ENCODE measurements at regions of chr11 and their contacts with region 1.

Region 1: DNA sequence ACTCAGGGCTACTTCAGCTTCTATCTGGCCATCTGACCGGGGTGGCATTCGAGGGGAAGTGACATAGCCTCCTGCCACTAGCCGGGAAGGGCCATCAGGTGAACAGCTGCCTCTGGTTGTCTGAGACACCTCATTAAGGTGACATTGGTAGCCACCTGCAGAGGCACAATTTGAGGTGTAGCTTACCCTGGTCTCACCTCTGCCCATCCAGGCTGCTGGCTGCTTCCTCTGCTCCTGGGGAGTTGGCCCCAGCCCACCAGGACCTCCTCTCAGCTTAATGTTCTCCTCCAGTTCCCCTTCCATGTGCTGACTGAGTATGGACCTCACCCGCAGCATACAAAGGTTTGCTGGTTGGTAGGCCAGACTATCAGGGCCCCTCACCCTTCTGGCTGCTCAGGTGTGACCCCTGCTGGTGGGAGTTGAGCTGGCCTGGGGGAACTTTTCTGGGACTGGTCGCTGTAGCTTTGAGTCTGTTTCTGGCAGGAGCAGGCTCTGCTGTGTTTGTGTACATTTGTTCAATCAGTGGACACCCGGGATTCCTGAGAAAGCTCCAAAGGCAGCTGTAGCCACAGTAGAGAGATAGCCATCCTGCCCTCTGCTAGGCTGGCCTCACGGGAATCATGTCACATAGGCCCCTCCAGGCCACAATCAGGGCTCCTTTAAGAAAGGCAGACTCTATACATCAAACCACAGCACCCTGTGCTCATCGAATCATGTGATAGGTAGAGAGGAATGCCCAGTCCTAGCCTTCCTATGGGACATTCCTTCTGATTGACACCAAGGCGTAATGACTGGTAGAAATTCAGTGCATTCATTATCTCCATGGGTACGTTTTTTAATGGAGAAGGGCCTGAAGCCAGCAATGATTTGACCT is 295.1 kb upstream of the PLET1 start:
- DNase-seq: peak; percentile 15 to 46
- ATAC-seq: peak; percentile 64 to 77
- H3K4me3 ChIP-seq: no peak overlapping the region
- H3K27ac ChIP-seq: no peak overlapping the region
- H3K4me1 ChIP-seq: no peaks in the 10 kb centered on the region
- H3K27me3 ChIP-seq: no peaks in the 10 kb centered on the region
- CTCF ChIP-seq: peak; percentile 20 to 76 (median 65)
- POLR2A ChIP-seq: no peak

Region 2: DNA sequence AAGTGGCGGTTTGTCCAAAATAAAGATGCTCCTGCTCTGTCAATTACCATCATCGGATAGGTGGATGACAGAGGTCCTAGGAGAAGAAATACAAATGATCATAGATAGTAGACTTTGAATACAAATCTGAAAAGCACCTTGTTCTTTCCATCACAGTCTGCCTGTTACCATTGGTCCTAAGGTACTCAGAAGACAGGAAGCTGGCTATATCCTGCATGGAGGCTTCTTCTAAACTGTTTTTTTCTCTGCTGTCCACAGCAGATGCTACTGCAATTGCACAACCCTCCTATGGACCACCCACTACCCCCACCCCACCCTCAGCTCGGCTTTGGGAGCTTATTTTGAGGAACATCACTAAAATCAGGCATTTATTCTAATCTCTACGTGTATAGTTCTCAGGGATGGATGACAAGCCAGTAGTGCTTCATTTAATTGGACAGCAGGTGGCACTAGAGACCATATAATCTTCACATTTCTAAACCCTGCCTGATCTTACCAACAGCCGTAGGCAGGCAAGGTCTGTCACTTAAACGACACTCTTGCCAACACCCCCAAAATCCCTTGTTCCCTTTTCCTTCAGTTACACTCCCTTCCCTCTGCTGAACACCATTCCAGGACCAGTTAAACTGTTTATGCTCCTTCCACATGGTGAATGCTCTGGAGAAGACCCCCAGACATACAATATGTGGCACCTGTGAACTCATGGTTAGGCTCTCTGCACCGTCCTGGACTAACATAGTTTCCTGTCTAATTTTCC is 336.1 kb before region 1 on chr11:
- in situ Hi-C with region 1: no loop called
- intact Hi-C with region 1: loop called (anchors 10 kb)
- DNase-seq: peak; percentile 13 to 21
- ATAC-seq: peak; percentile 92 to 97
- H3K4me3 ChIP-seq: no peak overlapping the region
- H3K27ac ChIP-seq: no peak overlapping the region
- H3K4me1 ChIP-seq: no peaks in the 10 kb centered on the region
- H3K27me3 ChIP-seq: no peaks in the 10 kb centered on the region
- CTCF ChIP-seq: peak; percentile 83 to 86 (median 85)
- POLR2A ChIP-seq: no peak

Region 3: GRCh38 chr11:112280268-112281126 is 275.2 kb before region 1 on chr11:
- in situ Hi-C with region 1: loop called in 3 of 4 experiments (anchors 5 to 10 kb)
- intact Hi-C with region 1: no loop called
- DNase-seq: peak; percentile 35 to 59
- ATAC-seq: peak; percentile 84 to 96
- H3K4me3 ChIP-seq: peak overlapping the region; percentile 43 to 67 (median 60)
- H3K27ac ChIP-seq: peak overlapping the region in 1 of 4 donors; percentile 29
- H3K4me1 ChIP-seq: peaks cover 0 to 4% of the 10 kb centered on the region in 2 donors
- H3K27me3 ChIP-seq: no peaks in the 10 kb centered on the region
- CTCF ChIP-seq: peak; percentile 48 to 73 (median 66)
- POLR2A ChIP-seq: no peak

Region 4: DNA sequence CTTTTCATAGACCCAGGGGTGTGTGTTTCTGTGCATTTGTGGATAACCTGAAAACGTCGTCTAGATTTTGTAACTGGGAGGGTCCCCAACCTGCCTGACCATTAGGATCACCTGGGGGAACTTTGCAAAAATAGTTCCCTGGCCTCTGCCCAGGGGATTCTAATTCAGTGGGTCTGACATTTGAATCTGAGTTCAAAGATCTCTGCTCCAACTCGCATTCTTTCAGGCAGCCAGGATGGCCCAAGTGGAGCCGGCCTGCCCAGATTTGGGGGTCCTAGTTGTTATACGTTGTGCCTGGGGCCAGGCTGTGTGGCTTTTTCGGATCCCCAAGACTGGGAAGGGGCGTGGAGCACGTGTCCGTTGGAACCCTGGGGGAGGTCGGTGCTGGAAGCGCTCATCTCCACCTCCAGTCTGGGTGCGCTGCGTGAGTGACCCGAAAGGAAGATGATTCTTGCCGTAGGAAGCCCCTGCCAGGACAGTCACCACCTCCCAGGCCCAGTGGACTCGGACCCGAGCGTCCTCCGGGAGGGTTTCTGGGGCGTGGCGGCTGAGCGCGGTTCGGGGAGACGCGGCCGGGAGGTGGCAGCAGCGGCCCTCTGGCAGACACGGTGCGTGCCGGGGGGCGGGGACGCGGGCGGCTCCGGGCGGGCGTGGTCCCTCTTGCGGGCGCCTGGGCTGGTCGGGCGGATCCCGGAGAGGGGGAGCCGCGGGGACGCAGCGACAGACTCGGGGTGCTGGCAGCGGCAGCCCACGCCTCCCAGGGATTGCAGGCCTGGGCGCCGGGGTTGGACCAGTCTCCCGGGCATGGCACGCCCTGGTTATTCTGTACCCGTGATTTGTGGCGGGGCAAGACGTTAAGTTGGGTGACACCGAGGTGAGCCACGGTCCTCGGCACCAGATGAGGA is 265.9 kb before region 1 on chr11:
- in situ Hi-C with region 1: loop called in 3 of 4 experiments (anchors 5 to 10 kb)
- intact Hi-C with region 1: loop called (anchors 1 kb)
- DNase-seq: peak; percentile 63 to 67
- ATAC-seq: peak; percentile 63 to 70
- H3K4me3 ChIP-seq: peak overlapping the region; percentile 61 to 77 (median 68)
- H3K27ac ChIP-seq: peak overlapping the region; percentile 71 to 85 (median 82)
- H3K4me1 ChIP-seq: peaks cover 42 to 44% of the 10 kb centered on the region in 2 donors
- H3K27me3 ChIP-seq: no peaks in the 10 kb centered on the region
- CTCF ChIP-seq: peak; percentile 79 to 96 (median 84)
- POLR2A ChIP-seq: peak; percentile 23 to 40

Region 5: GRCh38 chr11:112465433-112466024 is 90.2 kb before region 1 on chr11:
- in situ Hi-C with region 1: no loop called
- intact Hi-C with region 1: loop called (anchors 5 kb)
- DNase-seq: no peak
- ATAC-seq: no peak
- H3K4me3 ChIP-seq: no peak overlapping the region
- H3K27ac ChIP-seq: no peak overlapping the region
- H3K4me1 ChIP-seq: peaks cover 8 to 11% of the 10 kb centered on the region in 2 donors
- H3K27me3 ChIP-seq: no peaks in the 10 kb centered on the region
- CTCF ChIP-seq: no peak
- POLR2A ChIP-seq: no peak

Region 6: GRCh38 chr11:112525270-112525669 is 30.5 kb before region 1 on chr11:
- in situ Hi-C with region 1: no loop called
- intact Hi-C with region 1: no loop called
- DNase-seq: peak in 1 of 2 donors; percentile 18
- ATAC-seq: peak in 1 of 2 donors; percentile 43
- H3K4me3 ChIP-seq: no peak overlapping the region
- H3K27ac ChIP-seq: peak overlapping the region in 1 of 4 donors; percentile 33
- H3K4me1 ChIP-seq: peaks cover 22 to 39% of the 10 kb centered on the region in 2 donors
- H3K27me3 ChIP-seq: no peaks in the 10 kb centered on the region
- CTCF ChIP-seq: no peak
- POLR2A ChIP-seq: no peak

Region 7: DNA sequence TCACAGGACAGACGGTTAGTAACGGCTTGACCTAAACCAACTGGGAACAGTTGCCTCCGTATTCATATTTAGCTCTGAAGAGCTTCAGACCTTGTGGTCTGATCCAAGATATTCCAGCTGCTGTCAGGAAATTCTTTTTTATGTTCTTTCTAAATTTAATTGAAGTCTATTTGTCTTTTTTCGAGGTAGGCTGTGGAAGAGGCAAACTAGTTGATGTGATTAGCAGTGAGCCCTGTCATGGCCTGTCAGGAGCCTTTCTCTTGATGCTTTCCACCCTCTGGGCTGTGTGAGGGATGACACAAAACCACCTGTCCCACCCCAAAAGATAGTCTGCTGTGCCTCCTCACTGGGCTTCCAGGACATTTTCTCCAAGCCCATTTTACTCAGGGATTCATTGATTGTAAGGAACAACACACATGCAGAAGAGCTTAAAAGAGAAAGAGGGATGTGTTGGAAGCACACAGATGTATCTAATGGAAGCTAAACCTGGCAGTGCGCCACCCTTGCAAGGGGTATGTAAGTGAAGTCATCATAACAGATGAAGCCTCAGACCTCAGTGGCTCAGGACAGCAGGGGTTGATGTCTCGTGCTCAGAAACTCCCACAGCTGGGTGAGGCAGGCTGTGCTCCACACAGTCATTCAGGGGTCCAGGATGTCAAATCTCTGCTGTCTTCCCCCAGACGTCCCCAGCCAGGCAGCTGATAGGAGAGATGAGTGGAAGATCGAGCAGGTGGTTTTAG is 575.5 kb after region 1 on chr11:
- in situ Hi-C with region 1: no loop called
- intact Hi-C with region 1: no loop called
- DNase-seq: no peak
- ATAC-seq: no peak
- H3K4me3 ChIP-seq: no peak overlapping the region
- H3K27ac ChIP-seq: no peak overlapping the region
- H3K4me1 ChIP-seq: no peaks in the 10 kb centered on the region
- H3K27me3 ChIP-seq: no peaks in the 10 kb centered on the region
- CTCF ChIP-seq: no peak
- POLR2A ChIP-seq: no peak

Measured in gastrocnemius medialis (tissue), 4 donors.